B cell (primary cell): ENCODE measurements at regions of chr15 and their contacts with region 1.

Region 1: DNA sequence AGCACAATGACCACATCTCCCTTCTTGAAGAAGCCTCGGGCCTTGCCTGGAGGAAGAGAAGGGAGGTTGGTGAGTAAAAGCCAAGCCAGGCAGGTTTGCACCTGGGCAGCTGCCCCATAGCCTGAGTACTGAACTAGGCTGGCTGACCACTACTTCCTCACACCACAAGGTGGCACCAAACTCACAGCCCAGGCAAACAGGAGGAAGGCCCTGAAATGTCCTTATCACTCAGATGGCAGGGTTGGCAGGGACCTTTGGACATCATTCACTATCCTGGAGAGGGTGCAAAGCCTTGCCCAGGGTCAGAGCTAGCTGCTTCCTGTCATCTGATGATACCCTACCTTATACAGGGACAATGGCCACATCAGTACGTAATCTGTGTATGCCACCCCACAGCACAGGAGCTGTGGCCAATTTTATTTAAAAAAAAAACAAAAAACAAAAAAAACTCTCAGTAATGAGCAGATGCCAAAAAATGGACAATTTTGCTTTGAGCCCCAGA is 2.2 kb upstream of the GRAMD2A start:
- DNase-seq: peak; percentile 82
- ATAC-seq: peak; percentile 79
- H3K4me3 ChIP-seq: no peak overlapping the region
- H3K4me3 Mint-ChIP-seq: no peak overlapping the region
- H3K27ac ChIP-seq: no peak overlapping the region
- H3K27ac Mint-ChIP-seq: no peak overlapping the region
- H3K4me1 ChIP-seq: peaks cover 6 to 10% of the 10 kb centered on the region in 2 donors
- H3K4me1 Mint-ChIP-seq: peaks cover 29% of the 10 kb centered on the region
- H3K27me3 ChIP-seq: peaks cover 0 to 26% (median 5%) of the 10 kb centered on the region in 4 experiments
- H3K27me3 Mint-ChIP-seq: peaks cover 16% of the 10 kb centered on the region
- CTCF ChIP-seq: peak; percentile 89

Region 2: DNA sequence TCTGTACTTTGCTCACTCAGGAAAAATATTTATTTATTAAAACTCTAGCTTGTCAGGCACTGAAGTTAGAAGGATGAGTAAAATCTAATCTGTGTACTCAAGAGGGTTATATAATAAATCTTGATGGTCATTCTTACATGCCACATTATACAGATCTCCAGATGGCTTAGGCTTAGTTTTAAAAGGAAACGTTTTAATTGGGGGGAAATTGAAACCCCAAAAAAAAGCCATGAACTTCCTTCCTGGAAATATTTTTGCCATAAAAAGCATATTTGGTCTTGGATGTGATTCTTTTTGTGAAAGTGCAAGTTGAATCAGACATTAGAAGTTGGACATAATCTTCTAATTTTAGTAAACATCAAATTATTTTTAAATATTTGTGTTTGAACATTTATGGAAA is 75.5 kb before region 1 on chr15:
- CTCF ChIA-PET with region 1: no interaction called
- POLR2A ChIA-PET with region 1: no interaction called
- intact Hi-C with region 1: no loop called
- DNase-seq: no peak
- ATAC-seq: no peak
- H3K4me3 ChIP-seq: no peak overlapping the region
- H3K4me3 Mint-ChIP-seq: no peak overlapping the region
- H3K27ac ChIP-seq: no peak overlapping the region
- H3K27ac Mint-ChIP-seq: no peak overlapping the region
- H3K4me1 ChIP-seq: peaks cover 0 to under 1% of the 10 kb centered on the region in 2 donors
- H3K4me1 Mint-ChIP-seq: peaks cover 3% of the 10 kb centered on the region
- H3K27me3 ChIP-seq: no peaks in the 10 kb centered on the region
- H3K27me3 Mint-ChIP-seq: no peaks in the 10 kb centered on the region
- CTCF ChIP-seq: no peak

Region 3: GRCh38 chr15:72222259-72222832 is 22.6 kb after region 1 on chr15:
- CTCF ChIA-PET with region 1: interaction called, 87 read pairs
- POLR2A ChIA-PET with region 1: no interaction called
- intact Hi-C with region 1: no loop called
- DNase-seq: no peak
- ATAC-seq: no peak
- H3K4me3 ChIP-seq: no peak overlapping the region
- H3K4me3 Mint-ChIP-seq: no peak overlapping the region
- H3K27ac ChIP-seq: no peak overlapping the region
- H3K27ac Mint-ChIP-seq: peak overlapping the region; percentile 46
- H3K4me1 ChIP-seq: peaks cover 17 to 32% of the 10 kb centered on the region in 2 donors
- H3K4me1 Mint-ChIP-seq: peaks cover 55% of the 10 kb centered on the region
- H3K27me3 ChIP-seq: no peaks in the 10 kb centered on the region
- H3K27me3 Mint-ChIP-seq: no peaks in the 10 kb centered on the region
- CTCF ChIP-seq: no peak

Region 4: GRCh38 chr15:72239652-72240051 is 39.9 kb after region 1 on chr15:
- CTCF ChIA-PET with region 1: interaction called, 13 read pairs
- POLR2A ChIA-PET with region 1: no interaction called
- intact Hi-C with region 1: no loop called
- DNase-seq: no peak
- ATAC-seq: no peak
- H3K4me3 ChIP-seq: no peak overlapping the region
- H3K4me3 Mint-ChIP-seq: no peak overlapping the region
- H3K27ac ChIP-seq: no peak overlapping the region
- H3K27ac Mint-ChIP-seq: no peak overlapping the region
- H3K4me1 ChIP-seq: no peaks in the 10 kb centered on the region
- H3K4me1 Mint-ChIP-seq: no peaks in the 10 kb centered on the region
- H3K27me3 ChIP-seq: no peaks in the 10 kb centered on the region
- H3K27me3 Mint-ChIP-seq: no peaks in the 10 kb centered on the region
- CTCF ChIP-seq: no peak

Region 5: DNA sequence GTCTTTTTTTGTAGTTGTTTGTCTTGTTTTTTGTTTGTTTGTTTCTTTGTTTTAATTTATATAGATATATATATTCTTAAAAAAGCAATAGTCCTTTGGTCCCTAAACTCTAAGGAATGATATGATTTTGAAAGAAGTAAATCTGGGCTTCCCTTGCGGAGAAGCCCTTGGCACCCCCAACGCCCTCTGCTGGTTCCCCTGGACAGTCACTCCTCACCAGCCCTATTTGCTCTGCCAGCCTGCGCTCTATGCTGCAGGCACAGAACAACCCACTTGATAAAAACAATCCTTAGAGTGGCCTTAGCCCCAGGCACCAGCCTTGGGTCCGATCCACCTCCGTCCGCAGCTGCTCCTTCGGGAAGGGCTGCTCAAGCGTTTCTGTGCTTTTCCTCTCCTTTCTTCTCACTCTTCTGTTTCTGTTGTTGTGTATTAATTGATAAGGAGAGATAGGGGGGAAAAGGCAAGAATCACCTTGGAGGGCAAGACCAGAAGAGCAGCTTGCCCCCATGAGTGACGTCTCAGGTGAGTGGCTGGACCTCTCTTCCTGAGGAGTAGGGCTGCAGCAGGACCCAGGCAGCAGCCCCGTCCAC is 86.3 kb after region 1 on chr15:
- CTCF ChIA-PET with region 1: interaction called, 137 read pairs
- POLR2A ChIA-PET with region 1: no interaction called
- intact Hi-C with region 1: no loop called
- DNase-seq: peak; percentile 61
- ATAC-seq: peak; percentile 58
- H3K4me3 ChIP-seq: no peak overlapping the region
- H3K4me3 Mint-ChIP-seq: no peak overlapping the region
- H3K27ac ChIP-seq: no peak overlapping the region
- H3K27ac Mint-ChIP-seq: no peak overlapping the region
- H3K4me1 ChIP-seq: no peaks in the 10 kb centered on the region
- H3K4me1 Mint-ChIP-seq: no peaks in the 10 kb centered on the region
- H3K27me3 ChIP-seq: no peaks in the 10 kb centered on the region
- H3K27me3 Mint-ChIP-seq: no peaks in the 10 kb centered on the region
- CTCF ChIP-seq: peak; percentile 76

Region 6: DNA sequence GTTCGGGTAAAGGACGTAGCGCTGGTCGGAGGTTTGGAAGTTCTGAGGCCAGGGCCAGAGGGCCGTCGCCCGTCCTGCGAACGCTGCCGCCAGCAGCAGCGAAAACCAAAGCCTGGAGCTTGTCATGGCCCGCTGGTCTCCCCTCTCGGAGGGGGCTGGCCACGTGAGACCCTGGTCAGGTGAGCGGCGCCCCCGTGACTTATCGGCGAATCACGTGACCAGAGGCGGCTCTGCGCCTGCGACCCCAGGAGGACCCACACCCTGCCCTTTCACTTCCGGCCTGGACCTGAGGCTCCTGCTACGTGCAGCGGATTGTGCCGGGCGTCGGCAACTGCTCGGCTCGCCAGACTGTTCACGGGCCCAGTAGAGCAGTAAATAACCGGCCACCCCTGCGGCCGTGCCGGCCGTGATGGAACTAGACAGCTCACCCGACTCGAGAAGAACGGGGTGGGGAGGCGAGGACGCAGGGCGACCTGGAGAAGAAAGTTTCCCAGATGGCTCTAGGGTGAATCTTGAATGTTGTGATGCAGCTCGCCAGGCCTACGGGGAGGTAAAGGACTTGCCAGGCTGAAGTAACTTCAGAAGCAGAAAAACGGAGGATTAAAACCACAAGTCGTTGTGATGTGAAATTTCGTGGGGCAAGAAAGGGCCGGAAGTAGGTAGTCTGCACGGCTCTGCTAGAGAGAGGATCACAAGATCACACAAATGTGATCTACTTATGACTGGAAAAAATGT is 176.3 kb after region 1 on chr15 and contains the start of gene HEXA:
- CTCF ChIA-PET with region 1: interaction called, 3 read pairs
- POLR2A ChIA-PET with region 1: no interaction called
- intact Hi-C with region 1: loop called (anchors 1 kb)
- DNase-seq: peak; percentile 98
- ATAC-seq: peak; percentile 85
- H3K4me3 ChIP-seq: peak within 1 kb of the TSS; percentile 72 to 92 (median 85)
- H3K4me3 Mint-ChIP-seq: peak within 1 kb of the TSS; percentile 98
- H3K27ac ChIP-seq: peak within 1 kb of the TSS; percentile 85 to 95
- H3K27ac Mint-ChIP-seq: peak within 1 kb of the TSS; percentile 100
- H3K4me1 ChIP-seq: peaks cover 44 to 46% of the 10 kb centered on the region in 2 donors
- H3K4me1 Mint-ChIP-seq: peaks cover 54% of the 10 kb centered on the region
- H3K27me3 ChIP-seq: no peaks in the 10 kb centered on the region
- H3K27me3 Mint-ChIP-seq: no peaks in the 10 kb centered on the region
- CTCF ChIP-seq: no peak
- total RNA-seq, gene HEXA: 151 and 154 TPM in 2 replicates